ENCODE measurements at regions of chr2 and their contacts with region 1.

Region 1: GRCh38 chr2:173676647-173677046 is 288.5 kb downstream of the SP3 start:
- DNase-seq: no peak

Region 2: GRCh38 chr2:171966268-171966667 is 1710.4 kb before region 1 on chr2:
- intact Hi-C with region 1: no loop called
- DNase-seq: no peak

Region 3: DNA sequence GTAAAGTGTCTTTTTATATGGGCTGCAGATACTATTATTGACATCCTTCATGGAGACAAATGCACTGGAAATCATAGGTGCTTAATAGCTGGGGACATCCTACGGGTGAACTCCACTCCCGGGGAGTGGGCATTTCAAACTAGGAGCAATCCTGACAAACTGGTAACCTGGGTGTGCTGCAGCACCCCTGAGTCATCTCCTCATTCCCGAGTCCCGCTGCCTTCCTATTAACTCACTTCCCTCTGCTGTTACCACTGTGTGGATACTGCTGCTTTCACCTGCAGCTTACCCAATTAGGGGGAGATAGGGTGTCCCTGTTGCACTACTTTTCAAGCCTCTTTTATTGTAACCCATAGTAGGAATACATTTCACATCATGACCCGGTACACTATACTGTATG is 806.8 kb before region 1 on chr2:
- intact Hi-C with region 1: no loop called
- DNase-seq: no peak

Region 4: GRCh38 chr2:173656083-173656482 is 20.6 kb before region 1 on chr2:
- intact Hi-C with region 1: loop called in 1 of 2 experiments (anchors 1 kb)
- DNase-seq: no peak